ENCODE measurements at regions of chr18 and their contacts with region 1.

Region 1: GRCh38 chr18:35158728-35159450 is 81.9 kb upstream of the ZNF397 start:
- DNase-seq: peak; percentile 53
- H3K4me3 Mint-ChIP-seq: no peak overlapping the region
- H3K27ac Mint-ChIP-seq: peak overlapping the region; percentile 73
- H3K4me1 Mint-ChIP-seq: peaks cover 20% of the 10 kb centered on the region
- H3K27me3 Mint-ChIP-seq: no peaks in the 10 kb centered on the region

Region 2: GRCh38 chr18:35174093-35174731 is 15.3 kb after region 1 on chr18:
- CTCF ChIA-PET with region 1: interaction called, 5 read pairs
- intact Hi-C with region 1: loop called (anchors 2 kb)
- DNase-seq: peak; percentile 38
- H3K4me3 Mint-ChIP-seq: no peak overlapping the region
- H3K27ac Mint-ChIP-seq: peak overlapping the region; percentile 70
- H3K4me1 Mint-ChIP-seq: peaks cover 24% of the 10 kb centered on the region
- H3K27me3 Mint-ChIP-seq: no peaks in the 10 kb centered on the region

Region 3: DNA sequence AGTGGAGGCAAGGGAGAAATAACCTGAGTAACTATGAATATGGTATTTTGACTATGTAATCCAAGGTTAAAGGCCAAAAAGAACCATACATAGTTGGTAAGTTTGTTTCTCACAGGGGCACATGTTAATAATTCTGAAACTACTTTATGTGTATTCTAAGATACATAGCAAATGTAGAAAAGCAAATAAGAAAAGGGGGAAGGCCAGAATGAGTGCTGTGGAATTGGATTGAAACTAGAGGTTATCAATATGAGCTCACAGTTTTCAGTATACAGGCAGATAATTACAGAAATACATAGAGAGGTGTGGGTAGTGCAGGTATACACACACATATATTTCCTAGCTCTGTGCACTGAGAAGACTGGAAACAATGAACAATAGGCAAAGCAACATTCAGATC is 325.1 kb after region 1 on chr18:
- CTCF ChIA-PET with region 1: no interaction called
- intact Hi-C with region 1: loop called (anchors 5 kb)
- DNase-seq: no peak
- H3K4me3 Mint-ChIP-seq: no peak overlapping the region
- H3K27ac Mint-ChIP-seq: no peak overlapping the region
- H3K4me1 Mint-ChIP-seq: peaks cover 60% of the 10 kb centered on the region
- H3K27me3 Mint-ChIP-seq: no peaks in the 10 kb centered on the region

Measured in activated naive CD4-positive, alpha-beta T cell treated with anti-CD3 and anti-CD28 coated beads for 36 hours (primary cell).